ENCODE measurements at regions of chr3 and their contacts with region 1.

Region 1: GRCh38 chr3:66407611-66408218 is 93.1 kb downstream of the LRIG1 start:
- DNase-seq: peak; percentile 67
- ATAC-seq: peak; percentile 80
- H3K4me3 ChIP-seq: no peak overlapping the region
- H3K27ac ChIP-seq: no peak overlapping the region
- H3K4me1 ChIP-seq: no peaks in the 10 kb centered on the region
- H3K27me3 ChIP-seq: no peaks in the 10 kb centered on the region
- CTCF ChIP-seq: peak; percentile 73

Region 2: GRCh38 chr3:66593964-66594363 is 186.2 kb after region 1 on chr3:
- CTCF ChIA-PET with region 1: interaction called, 3 read pairs
- POLR2A ChIA-PET with region 1: interaction called, 10 read pairs
- intact Hi-C with region 1: no loop called
- DNase-seq: peak; percentile 85
- ATAC-seq: peak; percentile 74
- H3K4me3 ChIP-seq: no peak overlapping the region
- H3K27ac ChIP-seq: peak overlapping the region; percentile 73
- H3K4me1 ChIP-seq: peaks cover 8% of the 10 kb centered on the region
- H3K27me3 ChIP-seq: no peaks in the 10 kb centered on the region
- CTCF ChIP-seq: no peak

Region 3: DNA sequence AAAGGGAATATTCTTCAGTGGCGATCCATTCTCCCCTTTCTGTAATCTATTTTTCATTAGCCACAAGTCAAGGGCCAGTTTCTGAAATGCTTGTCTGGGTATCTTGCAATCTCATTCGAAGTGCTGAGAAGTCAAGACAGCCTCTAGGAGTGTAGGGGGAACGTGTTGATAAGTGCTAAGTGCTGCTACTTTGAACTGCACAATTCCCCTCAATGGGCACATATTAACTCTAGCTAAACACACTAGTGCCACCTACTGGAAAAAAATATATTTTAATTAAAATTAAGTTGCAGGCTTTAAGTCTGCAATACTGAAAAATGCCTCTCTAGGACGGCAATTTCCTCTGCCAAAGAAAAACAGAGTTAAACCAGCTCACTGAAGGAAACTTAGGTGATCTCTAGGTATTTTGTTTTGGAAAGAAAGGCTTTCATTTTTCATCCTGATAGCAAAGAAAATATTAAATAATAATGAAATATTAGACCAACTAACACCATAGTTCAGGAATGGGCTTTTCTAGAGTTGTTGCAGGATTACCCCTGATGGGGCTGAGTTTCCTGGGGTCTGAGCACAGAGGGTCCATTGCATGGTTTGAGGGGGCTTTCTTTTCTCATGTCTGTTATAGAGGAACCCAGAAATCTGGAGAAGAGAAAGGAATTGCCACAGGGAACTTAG is 408.5 kb after region 1 on chr3:
- CTCF ChIA-PET with region 1: no interaction called
- POLR2A ChIA-PET with region 1: no interaction called
- intact Hi-C with region 1: loop called (anchors 2 kb)
- DNase-seq: peak; percentile 58
- ATAC-seq: peak; percentile 42
- H3K4me3 ChIP-seq: no peak overlapping the region
- H3K27ac ChIP-seq: no peak overlapping the region
- H3K4me1 ChIP-seq: no peaks in the 10 kb centered on the region
- H3K27me3 ChIP-seq: no peaks in the 10 kb centered on the region
- CTCF ChIP-seq: peak; percentile 41; the same call in 1 of the 2 replicates

Region 4: DNA sequence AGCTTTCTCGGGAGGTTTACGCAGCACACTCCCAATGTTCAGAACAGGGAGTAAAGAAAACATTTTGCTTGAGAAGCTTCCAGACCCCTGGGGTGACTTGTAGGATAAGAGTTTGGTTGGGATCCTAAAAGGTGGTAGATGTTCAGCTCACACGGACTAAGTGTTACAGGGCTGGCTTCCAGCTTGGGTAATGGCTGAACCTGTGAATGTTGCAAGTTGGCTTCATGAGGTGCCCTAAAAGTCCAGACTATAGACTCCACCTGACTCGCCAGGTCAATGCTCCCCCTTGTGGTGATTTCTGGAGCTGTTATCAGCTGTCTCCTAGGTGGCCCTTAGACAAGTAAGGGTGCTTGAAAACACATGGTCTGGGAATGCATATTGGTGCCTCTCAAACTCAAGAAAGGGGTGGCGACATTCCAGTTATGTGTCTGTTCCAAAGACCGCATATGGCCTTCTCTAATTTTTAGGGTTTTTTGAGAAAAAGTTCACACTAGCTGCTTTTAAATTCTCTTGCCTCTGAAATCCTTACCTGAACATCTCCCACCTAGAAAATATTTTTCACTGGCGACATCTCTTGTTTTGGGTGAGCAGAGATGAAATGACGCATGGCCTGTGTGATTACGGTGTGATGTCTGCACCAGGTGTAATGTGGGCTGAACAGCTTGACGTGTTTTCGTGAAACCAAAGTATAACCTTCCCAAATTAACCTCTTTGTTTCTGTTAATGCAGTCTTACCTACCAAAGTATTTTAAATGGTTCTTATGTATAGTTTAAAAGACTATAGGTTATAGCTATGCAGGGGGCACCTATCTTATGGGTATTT is 414.7 kb after region 1 on chr3:
- CTCF ChIA-PET with region 1: no interaction called
- POLR2A ChIA-PET with region 1: interaction called, 27 read pairs
- intact Hi-C with region 1: loop called (anchors 2 kb)
- DNase-seq: peak; percentile 69
- ATAC-seq: peak; percentile 68; the same call in 1 of the 2 replicates
- H3K4me3 ChIP-seq: no peak overlapping the region
- H3K27ac ChIP-seq: no peak overlapping the region
- H3K4me1 ChIP-seq: no peaks in the 10 kb centered on the region
- H3K27me3 ChIP-seq: no peaks in the 10 kb centered on the region
- CTCF ChIP-seq: peak; percentile 63